K562 (cell line): ENCODE measurements at regions of chr21 and their contacts with region 1.

Region 1: DNA sequence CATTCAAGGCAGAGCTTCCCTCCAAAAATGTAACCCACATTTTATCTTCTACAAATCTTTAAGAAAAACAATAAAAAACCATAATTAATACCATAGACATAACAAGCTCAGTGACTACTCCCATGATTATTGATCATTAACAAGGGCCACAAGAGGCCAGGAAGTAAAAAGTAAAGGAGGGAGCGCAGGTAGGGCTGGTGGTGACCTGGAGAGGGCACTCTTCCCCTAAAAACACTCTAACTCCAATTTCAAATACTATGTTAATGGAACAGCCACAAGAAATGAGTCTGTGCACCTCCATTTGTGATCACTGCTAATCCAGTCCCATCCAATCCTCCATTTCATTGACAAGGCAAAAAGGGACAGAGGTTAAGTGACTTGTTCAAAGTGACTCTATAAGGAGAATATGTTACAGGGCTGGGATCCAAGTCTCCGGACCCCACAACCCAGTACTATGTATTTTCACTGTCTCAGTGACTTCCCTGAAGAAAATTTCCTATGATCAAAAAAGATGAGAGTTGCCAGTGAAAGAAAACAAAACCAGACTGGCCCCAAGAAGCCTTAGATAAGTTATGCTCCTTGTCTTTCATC is 41.2 kb upstream of the CFAP298 start:
- DNase-seq: peak; percentile 54 to 67 (median 62)
- ATAC-seq: peak; percentile 98
- H3K4me3 ChIP-seq: no peak overlapping the region
- H3K27ac ChIP-seq: no peak overlapping the region
- H3K4me1 ChIP-seq: no peaks in the 10 kb centered on the region
- H3K27me3 ChIP-seq: no peaks in the 10 kb centered on the region
- CTCF ChIP-seq: peak; percentile 77 to 88 (median 86)
- EP300 ChIP-seq: no peak
- POLR2A ChIP-seq: no peak
- RAD21 ChIP-seq: peak; percentile 70 to 84

Region 2: DNA sequence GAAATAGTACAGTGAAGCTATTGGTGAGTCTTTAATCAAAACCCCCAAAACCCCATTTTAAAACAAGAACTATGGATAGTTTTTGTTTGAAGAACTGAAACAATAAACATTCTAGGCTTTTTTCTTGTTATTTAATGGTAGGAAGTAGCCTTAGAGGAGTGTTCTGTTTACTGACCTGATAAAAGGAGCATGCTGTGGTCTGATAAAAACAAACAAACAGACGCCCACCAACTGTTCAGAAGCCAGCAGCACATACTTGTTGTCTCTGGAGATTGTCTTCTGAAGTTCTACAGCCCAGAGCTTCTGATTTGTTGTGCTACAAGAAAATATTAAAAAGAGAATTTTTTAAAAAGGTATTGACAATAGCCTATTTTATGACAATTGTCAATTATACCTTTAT is 12.9 kb after region 1 on chr21:
- CTCF ChIA-PET with region 1: no interaction called
- POLR2A ChIA-PET with region 1: no interaction called
- in situ Hi-C with region 1: no loop called
- intact Hi-C with region 1: no loop called
- DNase-seq: no peak
- ATAC-seq: no peak
- H3K4me3 ChIP-seq: no peak overlapping the region
- H3K27ac ChIP-seq: no peak overlapping the region
- H3K4me1 ChIP-seq: no peaks in the 10 kb centered on the region
- H3K27me3 ChIP-seq: no peaks in the 10 kb centered on the region
- CTCF ChIP-seq: no peak
- EP300 ChIP-seq: no peak
- POLR2A ChIP-seq: no peak
- RAD21 ChIP-seq: no peak

Region 3: DNA sequence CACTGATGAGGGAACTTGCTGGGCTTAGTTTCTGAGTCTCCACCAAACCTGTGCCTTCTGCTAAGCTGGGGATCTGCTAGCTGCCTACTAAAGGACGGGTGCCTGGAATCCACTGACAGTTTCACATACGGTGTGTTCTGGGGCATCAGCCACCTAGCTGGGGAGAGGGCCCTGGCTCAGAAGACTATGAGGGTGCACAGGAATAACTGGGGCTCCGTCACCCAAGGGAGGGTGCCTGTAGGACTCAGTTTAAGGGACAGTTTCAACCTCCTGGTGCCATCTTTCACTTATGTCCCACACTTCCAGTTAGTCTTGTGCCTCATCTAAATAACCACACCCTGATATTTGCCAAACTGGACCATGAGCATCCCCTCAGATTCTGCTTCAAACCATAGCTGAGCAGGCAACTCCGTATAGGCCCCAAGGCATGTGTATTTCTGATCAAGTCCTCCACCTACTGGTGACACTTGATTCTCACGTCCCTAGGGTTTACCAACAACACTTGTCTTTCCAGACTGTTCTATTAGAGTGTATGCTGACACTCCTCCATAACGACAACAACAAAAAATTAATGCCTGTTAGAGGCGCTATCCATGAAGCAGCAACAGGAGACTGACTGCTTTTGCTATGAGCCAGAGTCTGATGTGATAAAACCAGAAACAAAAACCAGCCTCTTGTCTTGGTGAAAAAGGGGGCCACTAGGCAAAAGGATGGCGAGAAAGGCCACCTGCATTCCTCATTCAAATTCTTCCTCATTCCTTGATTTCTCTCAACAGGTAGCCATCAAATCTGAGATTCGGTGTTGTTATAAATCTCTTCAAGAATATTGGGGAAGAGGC is 173.1 kb after region 1 on chr21:
- CTCF ChIA-PET with region 1: interaction called, 24 read pairs
- POLR2A ChIA-PET with region 1: no interaction called
- in situ Hi-C with region 1: no loop called
- intact Hi-C with region 1: loop called (anchors 1 kb)
- DNase-seq: peak; percentile 36 to 73 (median 52)
- ATAC-seq: peak; percentile 100
- H3K4me3 ChIP-seq: no peak overlapping the region
- H3K27ac ChIP-seq: no peak overlapping the region
- H3K4me1 ChIP-seq: no peaks in the 10 kb centered on the region
- H3K27me3 ChIP-seq: peaks cover 4 to 9% of the 10 kb centered on the region in 2 experiments; a peak in 4 of 5 replicates
- CTCF ChIP-seq: peak; percentile 71 to 88 (median 72)
- EP300 ChIP-seq: no peak
- POLR2A ChIP-seq: no peak
- RAD21 ChIP-seq: peak; percentile 75 to 95